MCF 10A (cell line): ENCODE measurements at regions of chr1 and their contacts with region 1.

Region 1: GRCh38 chr1:175597969-175598765 is 145.2 kb downstream of the TNR start:
- DNase-seq: peak; percentile 30
- H3K4me3 Mint-ChIP-seq: no peak overlapping the region
- H3K27ac Mint-ChIP-seq: no peak overlapping the region
- H3K4me1 Mint-ChIP-seq: peaks cover 11% of the 10 kb centered on the region
- H3K27me3 Mint-ChIP-seq: peaks cover 8% of the 10 kb centered on the region
- CTCF ChIP-seq: no peak

Region 2: GRCh38 chr1:175555266-175555665 is 42.9 kb before region 1 on chr1:
- CTCF ChIA-PET with region 1: no interaction called
- POLR2A ChIA-PET with region 1: no interaction called
- intact Hi-C with region 1: loop called (anchors 5 kb)
- DNase-seq: peak; percentile 51
- H3K4me3 Mint-ChIP-seq: no peak overlapping the region
- H3K27ac Mint-ChIP-seq: peak overlapping the region; percentile 13
- H3K4me1 Mint-ChIP-seq: peaks cover 13% of the 10 kb centered on the region
- H3K27me3 Mint-ChIP-seq: peaks cover under 1% of the 10 kb centered on the region
- CTCF ChIP-seq: no peak